ENCODE measurements at regions of chr5 and their contacts with region 1.

Region 1: DNA sequence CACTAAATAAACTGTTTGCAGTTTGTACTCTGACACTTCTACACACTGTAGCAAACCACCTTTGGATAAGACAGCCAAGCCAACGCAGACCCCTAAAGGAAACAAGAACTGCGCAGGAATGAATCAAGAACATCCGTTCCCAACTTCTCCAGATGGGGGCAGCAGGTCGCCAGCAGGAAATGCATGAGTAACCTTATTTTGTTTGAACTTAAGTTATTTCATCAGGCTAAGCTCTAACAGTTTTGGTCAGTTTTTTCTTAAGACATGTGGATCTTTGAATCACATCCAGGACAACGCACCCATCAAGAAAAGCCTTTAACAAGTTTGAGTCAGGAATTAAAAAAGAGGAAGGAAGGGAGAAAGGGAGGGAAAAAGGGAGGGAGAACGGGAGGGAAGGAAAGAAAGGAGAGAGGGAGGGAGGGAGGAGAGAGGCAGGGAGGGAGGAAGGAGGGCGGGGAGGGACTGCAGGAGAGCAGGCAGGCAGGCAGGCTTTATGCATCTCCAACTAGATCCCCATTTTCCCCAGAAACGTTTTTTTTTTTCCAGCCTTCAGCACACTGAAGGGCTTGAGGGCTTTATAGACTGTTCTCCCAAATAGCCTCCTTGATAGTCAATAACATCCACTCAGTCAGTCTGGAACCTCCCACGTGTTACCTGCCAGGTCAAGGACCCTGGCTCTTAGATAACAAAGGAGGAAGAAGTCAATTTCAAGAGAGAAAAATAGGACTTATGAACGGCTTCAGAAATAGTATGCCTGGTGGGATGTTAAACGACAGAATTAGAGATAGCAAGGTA is 22.2 kb downstream of the BHMT start:
- DNase-seq: peak; percentile 56 to 72
- H3K4me3 ChIP-seq: no peak overlapping the region
- H3K4me3 Mint-ChIP-seq: peak overlapping the region; percentile 79
- H3K27ac Mint-ChIP-seq: peak overlapping the region; percentile 79
- H3K4me1 ChIP-seq: 0 out of 2 replicates have a peak, but pooled peaks cover 5% of the 10 kb centered on the region
- H3K4me1 Mint-ChIP-seq: peaks cover 13% of the 10 kb centered on the region
- H3K27me3 ChIP-seq: no peaks in the 10 kb centered on the region
- H3K27me3 Mint-ChIP-seq: no peaks in the 10 kb centered on the region
- CTCF ChIP-seq: peak; percentile 90 to 93

Region 2: DNA sequence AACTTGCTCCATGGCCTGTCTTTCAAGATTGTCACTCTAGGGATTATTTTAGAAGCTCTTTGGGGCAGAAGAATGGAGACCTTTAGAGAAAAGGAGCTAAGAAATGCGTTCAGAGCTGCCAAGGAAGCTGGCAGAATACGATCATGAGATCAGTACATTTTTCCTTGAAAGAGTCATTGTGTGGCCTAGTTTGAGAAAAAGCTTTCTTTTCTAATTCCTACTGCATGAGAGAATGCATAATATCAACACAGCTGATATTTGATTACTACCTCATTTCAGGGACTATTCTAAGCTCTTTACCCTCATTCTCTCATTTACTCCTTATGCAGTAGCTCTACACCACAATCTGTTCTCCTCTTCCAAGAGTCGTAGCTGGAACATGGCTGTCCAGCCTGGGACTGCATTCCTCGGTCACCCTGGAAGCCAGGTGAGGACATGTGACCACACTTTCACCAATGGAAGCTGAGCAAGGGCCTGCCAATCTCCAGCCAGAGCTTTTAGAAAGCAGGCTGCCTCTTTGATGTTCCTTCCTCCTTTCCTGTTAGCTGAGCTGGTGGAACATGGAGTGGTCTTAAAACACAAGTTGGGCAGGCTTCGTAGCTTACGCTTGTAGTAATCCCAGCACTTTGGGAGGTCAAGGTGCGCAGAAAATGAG is 386.0 kb before region 1 on chr5:
- CTCF ChIA-PET with region 1: no interaction called
- POLR2A ChIA-PET with region 1: no interaction called
- intact Hi-C with region 1: no loop called
- DNase-seq: peak; percentile 28 to 41
- H3K4me3 ChIP-seq: no peak overlapping the region
- H3K4me3 Mint-ChIP-seq: no peak overlapping the region
- H3K27ac Mint-ChIP-seq: no peak overlapping the region
- H3K4me1 ChIP-seq: 0 out of 2 replicates have a peak, but pooled peaks cover 5% of the 10 kb centered on the region
- H3K4me1 Mint-ChIP-seq: peaks cover 6% of the 10 kb centered on the region
- H3K27me3 ChIP-seq: no peaks in the 10 kb centered on the region
- H3K27me3 Mint-ChIP-seq: no peaks in the 10 kb centered on the region
- CTCF ChIP-seq: no peak

Region 3: GRCh38 chr5:79020861-79021561 is 112.8 kb before region 1 on chr5:
- CTCF ChIA-PET with region 1: interaction called, 245 read pairs
- POLR2A ChIA-PET with region 1: no interaction called
- intact Hi-C with region 1: loop called (anchors 1 kb)
- DNase-seq: peak; percentile 50 to 60
- H3K4me3 ChIP-seq: no peak overlapping the region
- H3K4me3 Mint-ChIP-seq: no peak overlapping the region
- H3K27ac Mint-ChIP-seq: no peak overlapping the region
- H3K4me1 ChIP-seq: no peaks in the 10 kb centered on the region
- H3K4me1 Mint-ChIP-seq: peaks cover 10% of the 10 kb centered on the region
- H3K27me3 ChIP-seq: no peaks in the 10 kb centered on the region
- H3K27me3 Mint-ChIP-seq: peaks cover 3% of the 10 kb centered on the region
- CTCF ChIP-seq: peak; percentile 88 to 92

Region 4: GRCh38 chr5:79147076-79147475 is 13.2 kb after region 1 on chr5:
- CTCF ChIA-PET with region 1: interaction called, 10 read pairs
- POLR2A ChIA-PET with region 1: no interaction called
- intact Hi-C with region 1: no loop called
- DNase-seq: no peak
- H3K4me3 ChIP-seq: no peak overlapping the region
- H3K4me3 Mint-ChIP-seq: no peak overlapping the region
- H3K27ac Mint-ChIP-seq: no peak overlapping the region
- H3K4me1 ChIP-seq: peaks cover 4% of the 10 kb centered on the region; the same call in 1 of the 2 replicates
- H3K4me1 Mint-ChIP-seq: peaks cover 7% of the 10 kb centered on the region
- H3K27me3 ChIP-seq: no peaks in the 10 kb centered on the region
- H3K27me3 Mint-ChIP-seq: no peaks in the 10 kb centered on the region
- CTCF ChIP-seq: no peak

Region 5: GRCh38 chr5:79200573-79201183 is 66.8 kb after region 1 on chr5:
- CTCF ChIA-PET with region 1: interaction called, 4 read pairs
- POLR2A ChIA-PET with region 1: no interaction called
- intact Hi-C with region 1: loop called (anchors 1 kb)
- DNase-seq: peak in 1 of 2 experiments; percentile 43
- H3K4me3 ChIP-seq: no peak overlapping the region
- H3K4me3 Mint-ChIP-seq: no peak overlapping the region
- H3K27ac Mint-ChIP-seq: no peak overlapping the region
- H3K4me1 ChIP-seq: no peaks in the 10 kb centered on the region
- H3K4me1 Mint-ChIP-seq: no peaks in the 10 kb centered on the region
- H3K27me3 ChIP-seq: no peaks in the 10 kb centered on the region
- H3K27me3 Mint-ChIP-seq: no peaks in the 10 kb centered on the region
- CTCF ChIP-seq: peak; percentile 52 to 81

Region 6: GRCh38 chr5:79464695-79465332 is 331.0 kb after region 1 on chr5:
- CTCF ChIA-PET with region 1: interaction called, 3 read pairs
- POLR2A ChIA-PET with region 1: no interaction called
- intact Hi-C with region 1: loop called (anchors 1 kb)
- DNase-seq: peak in 1 of 2 experiments; percentile 11
- H3K4me3 ChIP-seq: no peak overlapping the region
- H3K4me3 Mint-ChIP-seq: no peak overlapping the region
- H3K27ac Mint-ChIP-seq: no peak overlapping the region
- H3K4me1 ChIP-seq: peaks cover 7% of the 10 kb centered on the region; the same call in 1 of the 2 replicates
- H3K4me1 Mint-ChIP-seq: peaks cover 9% of the 10 kb centered on the region
- H3K27me3 ChIP-seq: no peaks in the 10 kb centered on the region
- H3K27me3 Mint-ChIP-seq: no peaks in the 10 kb centered on the region
- CTCF ChIP-seq: peak; percentile 60 to 66

Region 7: DNA sequence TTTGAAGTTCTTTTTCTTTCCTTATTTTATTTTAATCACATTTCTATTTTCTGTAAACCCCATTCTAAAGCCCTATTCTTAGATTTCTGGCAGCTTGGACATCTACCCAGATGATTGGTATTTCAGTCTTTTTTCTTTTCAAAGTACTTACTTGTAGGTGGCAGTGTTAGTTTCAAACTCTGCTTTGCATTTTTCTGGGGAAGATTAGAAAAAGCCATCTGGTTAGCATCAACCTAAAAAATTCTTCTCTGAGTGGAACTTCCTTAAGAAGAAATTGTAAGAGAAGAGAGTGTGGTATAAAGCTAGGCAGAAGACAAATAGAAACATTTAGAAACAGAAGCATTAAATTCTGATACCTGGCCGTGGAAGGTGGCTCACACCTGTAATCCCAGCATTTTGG is 461.2 kb after region 1 on chr5:
- CTCF ChIA-PET with region 1: no interaction called
- POLR2A ChIA-PET with region 1: no interaction called
- intact Hi-C with region 1: no loop called
- DNase-seq: no peak
- H3K4me3 ChIP-seq: no peak overlapping the region
- H3K4me3 Mint-ChIP-seq: no peak overlapping the region
- H3K27ac Mint-ChIP-seq: no peak overlapping the region
- H3K4me1 ChIP-seq: no peaks in the 10 kb centered on the region
- H3K4me1 Mint-ChIP-seq: no peaks in the 10 kb centered on the region
- H3K27me3 ChIP-seq: no peaks in the 10 kb centered on the region
- H3K27me3 Mint-ChIP-seq: peaks cover 4% of the 10 kb centered on the region
- CTCF ChIP-seq: no peak